Gastrocnemius medialis (tissue), 4 donors: ENCODE measurements at regions of chr9 and their contacts with region 1.

Region 1: GRCh38 chr9:15096972-15097371 is 186.7 kb upstream of the FREM1 start:
- DNase-seq: no peak
- ATAC-seq: no peak
- H3K4me3 ChIP-seq: no peak overlapping the region
- H3K27ac ChIP-seq: no peak overlapping the region
- H3K4me1 ChIP-seq: no peaks in the 10 kb centered on the region
- H3K27me3 ChIP-seq: no peaks in the 10 kb centered on the region
- CTCF ChIP-seq: no peak
- POLR2A ChIP-seq: no peak

Region 2: DNA sequence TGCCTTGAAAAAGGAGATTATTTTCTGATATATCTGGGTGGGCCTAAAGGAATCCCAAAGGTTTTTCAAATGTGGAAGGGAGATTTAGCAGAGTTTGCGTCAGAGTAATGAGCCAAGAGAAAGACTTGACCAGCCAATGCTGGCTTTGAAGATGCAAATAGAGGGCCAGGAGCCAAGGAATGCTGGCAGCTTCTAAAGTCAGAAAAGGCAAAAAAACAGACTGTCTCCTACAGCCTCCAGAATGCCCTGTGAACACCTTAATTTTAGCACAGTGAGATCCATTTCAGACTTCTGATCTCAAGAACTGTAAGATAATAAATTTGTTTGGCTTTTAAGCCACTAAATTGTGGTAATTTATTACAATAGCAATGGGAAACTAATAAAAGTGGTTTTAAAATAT is 64.1 kb before region 1 on chr9:
- in situ Hi-C with region 1: loop called in 1 of 4 experiments (anchors 10 kb)
- intact Hi-C with region 1: no loop called
- DNase-seq: no peak
- ATAC-seq: no peak
- H3K4me3 ChIP-seq: no peak overlapping the region
- H3K27ac ChIP-seq: no peak overlapping the region
- H3K4me1 ChIP-seq: no peaks in the 10 kb centered on the region
- H3K27me3 ChIP-seq: no peaks in the 10 kb centered on the region
- CTCF ChIP-seq: no peak
- POLR2A ChIP-seq: no peak